ENCODE measurements at regions of chr5 and their contacts with region 1.

Region 1: DNA sequence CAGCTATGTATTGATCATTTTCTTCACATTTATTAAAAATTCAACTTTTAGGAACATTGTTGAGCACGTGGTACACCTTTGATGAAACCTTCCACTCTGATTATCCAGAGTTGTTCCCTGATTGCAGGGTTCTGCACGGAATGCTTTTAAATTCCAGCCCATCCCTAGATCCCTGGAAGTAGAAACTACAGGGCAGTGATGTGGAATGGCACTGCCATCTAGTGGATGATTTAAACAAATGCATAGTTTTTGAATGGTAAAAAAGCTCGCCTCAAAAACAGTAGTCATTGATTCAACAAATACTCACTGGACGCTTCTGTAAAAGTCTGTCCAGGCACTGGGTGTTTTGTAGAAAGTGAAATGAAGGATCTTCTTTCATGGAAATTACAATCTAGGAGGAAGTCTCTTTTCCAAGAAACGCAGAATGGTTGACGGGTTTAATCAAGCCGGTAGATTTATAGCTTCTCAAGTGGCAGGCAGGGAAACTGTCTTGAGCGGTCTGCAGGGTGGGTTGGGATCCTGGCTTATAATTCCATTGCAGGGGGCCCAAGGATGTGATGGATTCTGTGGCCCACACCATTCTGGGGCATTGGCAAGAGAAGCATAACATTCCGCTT is 118.4 kb downstream of the ARHGAP26 start:
- DNase-seq: no peak
- H3K4me3 Mint-ChIP-seq: no peak overlapping the region
- H3K27ac Mint-ChIP-seq: no peak overlapping the region
- H3K4me1 Mint-ChIP-seq: no peaks in the 10 kb centered on the region
- H3K27me3 Mint-ChIP-seq: no peaks in the 10 kb centered on the region

Region 2: DNA sequence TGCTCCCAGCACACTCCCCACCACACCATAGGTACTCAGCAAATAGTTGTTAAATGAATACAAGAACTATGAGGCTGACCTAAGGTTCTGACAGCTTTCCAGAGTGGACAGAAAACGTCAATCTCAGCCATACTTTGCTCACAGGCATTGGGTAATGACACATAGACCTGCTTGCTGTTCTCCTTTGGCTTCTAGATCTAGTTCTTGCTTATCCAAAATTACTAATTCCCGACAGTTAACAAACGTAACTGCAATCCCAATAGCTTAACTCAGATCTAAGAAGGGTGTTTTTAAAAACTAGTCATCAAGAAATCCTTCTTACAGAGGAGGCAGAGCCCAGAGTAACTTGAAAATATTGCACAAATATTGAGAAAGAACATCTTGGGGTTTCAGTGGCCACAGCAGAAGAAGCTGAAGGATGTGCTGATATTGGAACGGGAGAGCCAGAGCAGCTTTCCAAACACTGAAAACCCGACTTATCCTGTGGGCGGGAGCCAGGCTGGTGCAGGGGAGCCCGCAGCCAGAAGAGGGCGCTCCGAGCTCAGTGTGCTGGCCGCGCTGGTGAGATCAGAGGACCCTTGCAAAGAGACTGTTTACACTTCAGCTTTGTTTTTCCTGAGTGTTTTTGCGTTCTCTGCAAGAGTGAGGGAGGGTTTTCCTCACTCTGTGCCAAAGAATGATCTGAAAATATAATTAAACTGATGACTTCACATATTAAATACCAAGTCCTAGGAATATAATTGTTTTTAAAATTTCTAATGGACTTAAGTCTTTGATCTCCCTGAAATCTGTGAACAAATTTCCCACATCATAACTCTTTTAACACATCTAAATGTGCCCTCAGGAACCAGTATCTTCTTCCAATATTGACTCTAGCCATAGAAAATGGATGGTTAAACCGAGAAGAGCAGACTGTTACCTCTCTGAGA is 233.0 kb before region 1 on chr5:
- CTCF ChIA-PET with region 1: interaction called, 10 read pairs
- DNase-seq: peak; percentile 76
- H3K4me3 Mint-ChIP-seq: no peak overlapping the region
- H3K27ac Mint-ChIP-seq: no peak overlapping the region
- H3K4me1 Mint-ChIP-seq: no peaks in the 10 kb centered on the region
- H3K27me3 Mint-ChIP-seq: peaks cover 34% of the 10 kb centered on the region

Region 3: GRCh38 chr5:142713121-142713706 is 175.4 kb before region 1 on chr5:
- CTCF ChIA-PET with region 1: interaction called, 217 read pairs
- DNase-seq: peak; percentile 87
- H3K4me3 Mint-ChIP-seq: peak overlapping the region; percentile 68
- H3K27ac Mint-ChIP-seq: no peak overlapping the region
- H3K4me1 Mint-ChIP-seq: peaks cover 6% of the 10 kb centered on the region
- H3K27me3 Mint-ChIP-seq: peaks cover 32% of the 10 kb centered on the region

Region 4: DNA sequence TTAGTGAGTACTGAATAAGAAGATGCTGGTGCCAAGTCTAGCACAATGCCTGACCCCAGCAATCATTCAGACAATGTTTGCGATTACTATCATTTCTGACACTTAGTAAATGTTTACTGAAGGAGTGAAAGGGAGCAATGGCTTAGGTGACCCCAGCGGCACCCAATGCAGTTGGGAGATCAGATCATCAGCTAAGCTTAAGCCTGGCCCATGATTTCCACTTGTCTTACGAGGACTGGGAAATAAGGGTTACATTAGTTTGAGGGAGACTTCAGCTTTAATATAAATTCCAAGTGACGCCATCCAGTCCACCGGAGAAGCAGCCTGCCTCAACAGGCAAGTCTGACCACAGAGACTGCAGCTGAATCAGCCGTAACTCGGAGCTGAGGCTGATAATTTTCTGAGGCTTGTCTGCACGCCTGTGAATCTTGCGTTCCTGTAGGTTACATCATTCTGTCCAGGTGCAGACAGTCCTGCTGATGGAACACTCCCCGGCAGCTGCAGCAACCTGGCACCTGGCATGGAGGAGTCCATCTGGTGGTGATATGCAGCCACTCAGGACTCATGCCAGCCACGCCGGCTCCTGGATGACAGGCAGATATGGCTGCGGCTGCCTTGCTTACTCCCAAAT is 167.8 kb before region 1 on chr5:
- CTCF ChIA-PET with region 1: interaction called, 217 read pairs
- DNase-seq: no peak
- H3K4me3 Mint-ChIP-seq: no peak overlapping the region
- H3K27ac Mint-ChIP-seq: no peak overlapping the region
- H3K4me1 Mint-ChIP-seq: no peaks in the 10 kb centered on the region
- H3K27me3 Mint-ChIP-seq: peaks cover 28% of the 10 kb centered on the region

Region 5: DNA sequence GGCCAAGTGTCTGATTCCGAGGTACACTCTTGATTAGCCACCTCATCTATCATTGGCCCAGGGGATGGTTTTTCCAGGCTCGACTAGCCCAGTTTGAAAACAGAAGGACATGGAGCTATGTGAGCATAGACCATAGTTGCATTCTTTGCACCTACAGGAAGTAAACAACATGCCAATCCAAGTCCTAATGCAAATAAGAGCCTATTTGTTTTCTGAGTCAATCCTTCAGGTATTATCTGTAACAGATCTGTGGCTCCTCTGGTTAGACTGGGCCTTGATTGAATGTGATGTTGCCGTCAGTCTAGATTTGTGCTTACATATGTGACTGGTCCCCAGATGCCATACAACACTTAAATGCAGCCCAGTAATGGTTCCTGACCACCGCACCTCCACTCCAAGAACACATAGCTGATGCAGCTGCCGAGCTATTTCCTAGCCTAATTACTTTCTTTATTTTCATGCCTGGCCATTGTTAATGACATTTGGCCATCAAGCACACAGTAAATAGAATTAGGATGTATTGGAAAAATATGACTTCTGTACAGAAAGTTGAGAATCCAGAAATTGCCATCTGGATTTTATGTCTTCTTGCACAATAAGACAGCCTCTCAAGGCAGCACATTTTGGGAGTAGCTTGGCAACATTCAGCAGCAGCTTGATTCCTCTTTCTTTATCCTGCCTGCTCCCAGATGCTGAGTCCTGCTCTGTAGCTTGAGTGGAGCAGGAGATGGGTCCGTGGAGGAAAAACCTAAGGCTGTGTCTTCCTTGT is 147.9 kb before region 1 on chr5:
- CTCF ChIA-PET with region 1: interaction called, 169 read pairs
- DNase-seq: no peak
- H3K4me3 Mint-ChIP-seq: no peak overlapping the region
- H3K27ac Mint-ChIP-seq: no peak overlapping the region
- H3K4me1 Mint-ChIP-seq: no peaks in the 10 kb centered on the region
- H3K27me3 Mint-ChIP-seq: peaks cover 40% of the 10 kb centered on the region

Region 6: DNA sequence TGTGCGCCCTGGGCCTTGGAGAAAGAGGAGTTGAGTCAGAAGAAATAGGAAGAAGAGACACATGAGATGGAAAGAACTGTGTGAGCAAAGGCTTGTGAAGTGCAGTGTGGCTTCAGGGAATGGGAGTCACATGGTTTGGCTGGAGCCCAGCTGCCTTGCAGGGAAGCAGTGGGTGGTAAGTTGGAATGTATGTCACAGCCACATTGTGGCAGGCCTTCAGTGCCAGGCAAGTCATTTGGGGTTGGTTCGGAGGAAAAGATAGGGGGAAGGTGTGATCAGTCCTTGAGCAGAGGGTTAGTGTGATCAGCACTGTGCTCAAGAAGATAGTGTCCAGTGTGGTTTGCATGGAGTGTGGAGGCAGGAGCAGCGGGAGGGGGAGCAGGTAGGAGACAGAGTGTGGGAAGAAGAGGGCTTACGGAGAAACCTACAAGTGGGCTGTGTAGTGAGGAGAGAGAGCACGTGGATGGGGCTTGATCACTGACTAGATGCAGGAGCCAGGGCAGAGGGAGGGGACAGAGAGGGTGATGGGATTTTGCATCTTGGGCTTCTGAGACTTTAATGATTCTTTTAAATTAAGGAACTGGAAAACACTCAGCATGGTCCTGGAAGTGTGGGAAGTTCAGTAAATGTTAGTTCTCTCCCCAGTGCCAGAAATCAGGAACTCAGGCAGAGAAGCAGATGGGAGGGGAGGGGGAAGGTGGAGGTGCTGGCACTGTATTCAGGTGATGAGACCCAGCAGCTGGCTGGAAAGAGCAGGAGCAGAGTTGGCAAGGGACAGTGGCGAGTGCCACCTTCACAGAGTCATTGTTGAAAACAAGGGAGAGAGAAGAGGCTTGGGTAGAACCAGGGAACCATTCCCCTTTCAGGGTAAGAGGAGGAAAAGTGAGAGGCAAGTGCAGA is 71.8 kb before region 1 on chr5:
- CTCF ChIA-PET with region 1: no interaction called
- DNase-seq: no peak
- H3K4me3 Mint-ChIP-seq: no peak overlapping the region
- H3K27ac Mint-ChIP-seq: no peak overlapping the region
- H3K4me1 Mint-ChIP-seq: peaks cover 5% of the 10 kb centered on the region
- H3K27me3 Mint-ChIP-seq: no peaks in the 10 kb centered on the region

Region 7: GRCh38 chr5:142874537-142874936 is 14.0 kb before region 1 on chr5:
- CTCF ChIA-PET with region 1: interaction called, 21 read pairs
- DNase-seq: no peak
- H3K4me3 Mint-ChIP-seq: no peak overlapping the region
- H3K27ac Mint-ChIP-seq: no peak overlapping the region
- H3K4me1 Mint-ChIP-seq: no peaks in the 10 kb centered on the region
- H3K27me3 Mint-ChIP-seq: no peaks in the 10 kb centered on the region

Measured in activated naive CD4-positive, alpha-beta T cell treated with anti-CD3 and anti-CD28 coated beads, Interleukin-2, amount 10 ng/mL, durations not matched to agents 7 days and 5 days (primary cell).